MCF 10A (cell line): ENCODE measurements at regions of chr18 and their contacts with region 1.

Region 1: GRCh38 chr18:31267823-31268481 is 50.0 kb upstream of the DSG1 start:
- DNase-seq: no peak
- H3K4me3 Mint-ChIP-seq: peak overlapping the region; percentile 12
- H3K27ac Mint-ChIP-seq: peak overlapping the region; percentile 84
- H3K4me1 Mint-ChIP-seq: peaks cover 28% of the 10 kb centered on the region
- H3K27me3 Mint-ChIP-seq: no peaks in the 10 kb centered on the region
- CTCF ChIP-seq: no peak

Region 2: DNA sequence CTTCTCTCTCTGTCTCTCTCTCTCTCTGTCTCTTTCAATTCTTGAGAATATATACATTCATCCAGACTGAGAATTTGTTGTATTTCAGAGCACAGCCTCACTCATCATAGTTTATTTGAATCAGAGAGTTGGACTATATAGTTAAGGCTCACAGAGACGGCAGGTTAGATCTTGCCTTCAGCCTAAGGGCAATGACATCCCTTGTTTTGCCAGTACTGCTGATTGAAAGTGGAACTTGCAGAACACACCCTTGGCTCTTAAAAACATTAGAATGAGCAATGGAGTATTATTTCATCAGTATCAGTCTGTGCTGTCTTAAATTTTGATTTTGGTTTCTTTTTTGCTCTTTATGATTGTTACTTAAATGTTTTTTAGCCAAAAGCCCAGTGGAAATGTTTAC is 12.0 kb before region 1 on chr18:
- CTCF ChIA-PET with region 1: interaction called, 16 read pairs
- POLR2A ChIA-PET with region 1: interaction called, 36 read pairs
- intact Hi-C with region 1: no loop called
- DNase-seq: peak; percentile 85
- H3K4me3 Mint-ChIP-seq: peak overlapping the region; percentile 12
- H3K27ac Mint-ChIP-seq: peak overlapping the region; percentile 64
- H3K4me1 Mint-ChIP-seq: peaks cover 16% of the 10 kb centered on the region
- H3K27me3 Mint-ChIP-seq: no peaks in the 10 kb centered on the region
- CTCF ChIP-seq: no peak

Region 3: GRCh38 chr18:31325051-31325450 is 57.1 kb after region 1 on chr18:
- CTCF ChIA-PET with region 1: no interaction called
- POLR2A ChIA-PET with region 1: interaction called, 11 read pairs
- intact Hi-C with region 1: no loop called
- DNase-seq: peak; percentile 94
- H3K4me3 Mint-ChIP-seq: no peak overlapping the region
- H3K27ac Mint-ChIP-seq: peak overlapping the region; percentile 50
- H3K4me1 Mint-ChIP-seq: peaks cover 8% of the 10 kb centered on the region
- H3K27me3 Mint-ChIP-seq: no peaks in the 10 kb centered on the region
- CTCF ChIP-seq: no peak

Region 4: DNA sequence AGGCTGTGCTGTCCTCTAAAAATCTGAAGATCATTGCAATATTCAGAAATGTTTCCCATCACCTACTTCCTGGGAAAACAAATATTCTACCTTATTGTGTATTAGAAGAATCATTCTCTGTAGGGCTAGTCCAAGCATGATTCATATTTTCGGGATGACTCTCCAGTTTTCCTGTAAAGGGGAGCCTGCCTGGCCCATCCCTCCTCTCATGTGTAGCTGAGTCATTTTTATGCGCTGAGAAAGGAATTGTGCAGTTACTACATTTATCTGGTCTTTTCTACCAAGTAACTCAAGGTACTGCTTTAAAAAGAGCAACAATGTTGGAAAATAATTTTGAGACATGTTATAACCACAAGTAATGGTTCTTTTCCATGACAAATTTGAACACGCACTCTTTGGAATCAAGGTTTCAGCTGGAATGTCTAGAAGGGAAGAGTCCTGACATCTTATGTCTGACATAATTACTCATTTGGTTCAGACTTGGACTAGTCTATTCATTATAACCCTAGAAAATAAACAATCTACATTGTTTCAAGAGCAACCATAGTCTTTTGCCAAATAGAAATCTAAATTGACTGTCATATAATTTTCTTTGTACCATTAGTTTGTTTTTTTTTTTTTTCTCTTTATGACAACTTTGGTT is 186.2 kb after region 1 on chr18:
- CTCF ChIA-PET with region 1: interaction called, 10 read pairs
- POLR2A ChIA-PET with region 1: interaction called, 94 read pairs
- intact Hi-C with region 1: loop called (anchors 5 kb)
- DNase-seq: peak; percentile 96
- H3K4me3 Mint-ChIP-seq: peak overlapping the region; percentile 67
- H3K27ac Mint-ChIP-seq: peak overlapping the region; percentile 94
- H3K4me1 Mint-ChIP-seq: peaks cover 23% of the 10 kb centered on the region
- H3K27me3 Mint-ChIP-seq: no peaks in the 10 kb centered on the region
- CTCF ChIP-seq: no peak